Panc1 (cell line): ENCODE measurements at regions of chr12 and their contacts with region 1.

Region 1: DNA sequence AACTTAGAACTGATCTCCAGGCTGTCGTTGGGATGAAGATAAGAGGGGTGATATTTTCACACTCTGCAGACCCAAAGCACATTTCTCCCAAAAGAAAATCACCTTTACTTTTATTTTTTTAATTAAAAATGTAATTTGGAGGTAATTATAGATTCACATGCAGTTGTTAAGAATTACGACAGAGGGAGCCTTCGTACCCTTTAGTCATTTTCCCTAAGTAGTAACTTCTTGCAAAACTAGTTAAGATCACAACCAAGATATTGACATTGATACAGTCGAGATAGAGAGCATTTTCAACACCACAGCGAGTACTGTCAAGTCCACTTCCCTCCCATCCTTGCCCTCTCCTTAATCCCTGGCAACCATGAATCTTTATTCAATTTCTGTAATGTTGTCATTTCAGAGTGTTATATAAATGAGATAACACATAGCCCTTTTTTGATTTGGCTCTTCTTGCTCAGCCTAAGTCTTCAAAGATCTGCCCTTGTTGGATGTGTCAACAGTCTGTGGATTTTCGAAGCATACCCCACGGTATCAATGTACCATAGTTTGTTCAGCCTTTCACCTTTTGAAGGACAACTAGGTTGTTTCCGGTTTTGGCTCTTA is 39.6 kb downstream of the DNAH10 start:
- DNase-seq: no peak
- ATAC-seq: no peak
- H3K4me3 ChIP-seq: no peak overlapping the region
- H3K27ac ChIP-seq: no peak overlapping the region
- H3K4me1 ChIP-seq: no peaks in the 10 kb centered on the region
- H3K27me3 ChIP-seq: peaks cover 3% of the 10 kb centered on the region; the same call in 1 of the 2 replicates
- CTCF ChIP-seq: peak; percentile 72; the same call in 1 of the 2 replicates

Region 2: DNA sequence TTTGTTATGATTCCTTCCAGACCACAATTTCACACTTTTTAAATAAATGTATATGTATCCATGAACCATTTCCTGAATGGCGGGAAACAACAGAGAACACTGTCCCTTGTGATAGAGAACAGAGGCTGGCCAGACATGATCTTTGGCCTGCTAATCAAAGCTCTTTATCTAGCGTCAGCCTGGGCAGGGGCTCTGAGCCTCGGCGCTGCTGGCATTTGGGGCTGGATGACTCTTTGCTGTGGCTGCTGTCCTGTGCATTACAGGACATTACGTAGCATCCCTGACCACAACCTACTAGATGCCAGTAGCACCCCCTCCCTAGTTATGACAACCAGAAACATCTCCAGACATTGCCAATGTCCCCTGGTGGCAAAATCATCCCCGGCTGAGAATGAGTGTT is 38.1 kb after region 1 on chr12:
- CTCF ChIA-PET with region 1: no interaction called
- POLR2A ChIA-PET with region 1: no interaction called
- in situ Hi-C with region 1: no loop called
- intact Hi-C with region 1: no loop called
- DNase-seq: no peak
- ATAC-seq: no peak
- H3K4me3 ChIP-seq: no peak overlapping the region
- H3K27ac ChIP-seq: no peak overlapping the region
- H3K4me1 ChIP-seq: no peaks in the 10 kb centered on the region
- H3K27me3 ChIP-seq: no peaks in the 10 kb centered on the region
- CTCF ChIP-seq: no peak

Region 3: DNA sequence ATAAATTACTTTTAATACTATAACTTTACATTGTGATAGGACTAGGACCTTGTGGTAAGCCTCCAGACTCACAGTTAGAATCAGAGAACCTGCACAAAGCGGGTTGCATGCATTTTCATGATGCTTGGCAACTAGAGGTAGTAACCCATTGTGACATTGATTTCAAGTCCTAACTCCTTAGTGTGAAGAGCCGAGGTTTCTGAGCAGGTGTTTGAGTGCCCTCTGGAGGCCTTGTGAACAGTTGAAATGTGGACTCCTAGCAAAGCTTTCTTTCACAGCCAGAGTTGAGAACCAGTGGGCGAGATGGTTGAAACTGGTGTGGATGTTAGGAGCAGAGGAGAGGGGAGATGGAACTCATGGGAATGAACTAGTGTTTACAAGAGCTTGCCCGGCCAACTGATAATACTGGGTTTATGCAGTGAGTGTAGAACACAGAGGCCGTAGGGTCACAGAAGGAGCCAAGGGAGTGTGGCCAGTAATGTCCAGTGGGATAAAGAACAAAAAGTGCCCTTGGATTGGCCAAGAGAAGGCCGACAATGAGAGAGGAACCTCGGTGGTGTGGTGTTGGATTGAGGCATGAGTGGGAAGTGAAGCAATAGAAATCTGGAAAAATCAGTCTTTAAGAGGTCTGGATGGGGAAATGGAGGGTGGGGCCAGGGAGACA is 182.3 kb after region 1 on chr12:
- CTCF ChIA-PET with region 1: interaction called, 4 read pairs
- POLR2A ChIA-PET with region 1: no interaction called
- in situ Hi-C with region 1: no loop called
- intact Hi-C with region 1: loop called (anchors 5 kb)
- DNase-seq: no peak
- ATAC-seq: peak; percentile 96
- H3K4me3 ChIP-seq: no peak overlapping the region
- H3K27ac ChIP-seq: no peak overlapping the region
- H3K4me1 ChIP-seq: no peaks in the 10 kb centered on the region
- H3K27me3 ChIP-seq: no peaks in the 10 kb centered on the region
- CTCF ChIP-seq: peak; percentile 84

Region 4: GRCh38 chr12:124884587-124885438 is 1083.1 kb after region 1 on chr12:
- CTCF ChIA-PET with region 1: no interaction called
- POLR2A ChIA-PET with region 1: no interaction called
- in situ Hi-C with region 1: no loop called
- intact Hi-C with region 1: loop called (anchors 10 kb)
- DNase-seq: no peak
- ATAC-seq: peak; percentile 21; the same call in 1 of the 2 replicates
- H3K4me3 ChIP-seq: no peak overlapping the region
- H3K27ac ChIP-seq: no peak overlapping the region
- H3K4me1 ChIP-seq: peaks cover 16% of the 10 kb centered on the region
- H3K27me3 ChIP-seq: no peaks in the 10 kb centered on the region
- CTCF ChIP-seq: no peak